CD4-positive, alpha-beta T cell (primary cell): ENCODE measurements at regions of chr9 and their contacts with region 1.

Region 1: DNA sequence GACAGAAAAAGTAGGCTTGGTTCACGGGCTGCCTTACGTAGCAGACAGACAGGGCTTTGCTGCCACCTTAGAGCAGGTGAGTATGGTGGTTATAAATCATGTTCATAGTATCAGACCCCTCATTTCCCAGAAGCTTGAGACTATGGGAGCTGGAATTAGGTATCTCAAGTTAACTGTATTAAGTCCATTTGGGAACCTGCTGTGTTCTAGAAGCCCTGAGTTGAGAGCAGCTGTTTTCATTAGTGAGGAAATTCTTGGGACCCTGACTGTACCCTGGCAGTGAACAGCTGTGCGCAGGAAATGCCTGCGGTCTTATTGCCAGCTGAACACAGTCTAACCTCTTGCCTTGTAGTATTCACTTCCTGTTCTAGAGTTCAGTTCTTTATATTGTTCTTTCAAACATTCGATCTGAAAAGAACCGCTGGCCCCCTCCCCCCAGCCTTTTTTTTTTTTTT is 29.8 kb downstream of the UGCG start:
- DNase-seq: peak; percentile 29 to 89 (median 52)
- ATAC-seq: peak; percentile 95
- H3K4me3 ChIP-seq: no peak overlapping the region
- H3K4me3 Mint-ChIP-seq: peak overlapping the region; percentile 82
- H3K27ac ChIP-seq: peak overlapping the region in 1 of 2 donors; percentile 46
- H3K27ac Mint-ChIP-seq: peak overlapping the region; percentile 87
- H3K4me1 ChIP-seq: peaks cover 27% of the 10 kb centered on the region
- H3K4me1 Mint-ChIP-seq: peaks cover 57% of the 10 kb centered on the region
- H3K27me3 ChIP-seq: no peaks in the 10 kb centered on the region
- H3K27me3 Mint-ChIP-seq: no peaks in the 10 kb centered on the region
- CTCF ChIP-seq: no peak

Region 2: DNA sequence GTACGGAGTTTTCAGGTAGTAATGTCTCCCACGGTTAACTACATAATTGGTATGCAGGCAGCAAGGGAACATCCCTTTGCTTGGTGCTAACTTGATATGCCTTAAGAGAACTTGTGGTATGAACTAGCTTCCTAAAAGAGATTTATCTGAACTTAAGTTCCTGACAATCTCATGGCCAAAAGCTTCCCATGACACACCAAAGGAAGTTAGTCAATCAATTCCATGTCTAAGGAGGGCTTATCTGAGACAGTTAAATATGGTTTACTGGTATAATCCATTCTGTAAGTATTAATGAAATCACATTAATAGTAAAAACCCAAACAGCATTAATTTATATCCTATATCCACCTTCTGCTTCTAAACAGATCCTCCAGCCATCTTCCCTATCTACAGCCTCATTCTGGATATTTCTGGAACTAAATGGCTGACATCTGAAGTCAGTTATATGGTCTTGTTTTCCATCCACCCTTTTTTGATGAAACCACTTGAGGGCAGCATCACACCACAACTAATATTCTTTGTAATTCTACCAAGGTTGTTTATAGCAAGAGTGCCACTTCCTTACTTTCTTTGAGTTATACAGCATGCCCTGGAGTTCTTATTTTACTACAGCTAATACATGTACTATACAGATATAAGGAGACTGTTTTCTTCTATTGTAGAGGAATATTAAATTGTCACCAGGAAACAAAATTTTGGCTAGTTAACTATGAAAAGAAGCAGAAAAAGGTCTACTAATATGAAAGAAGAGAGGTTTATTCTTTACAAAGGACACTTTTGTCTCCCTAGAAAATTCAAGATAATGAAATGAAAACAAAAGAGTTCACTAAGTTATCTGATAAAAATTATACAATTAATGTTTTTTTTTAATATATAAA is 166.4 kb before region 1 on chr9:
- CTCF ChIA-PET with region 1: no interaction called
- POLR2A ChIA-PET with region 1: no interaction called
- intact Hi-C with region 1: loop called in 1 of 2 experiments (anchors 10 kb)
- DNase-seq: peak in 12 of 14 experiments; percentile 6 to 81 (median 32)
- ATAC-seq: peak; percentile 85
- H3K4me3 ChIP-seq: no peak overlapping the region
- H3K4me3 Mint-ChIP-seq: no peak overlapping the region
- H3K27ac ChIP-seq: no peak overlapping the region
- H3K27ac Mint-ChIP-seq: no peak overlapping the region
- H3K4me1 ChIP-seq: no peaks in the 10 kb centered on the region
- H3K4me1 Mint-ChIP-seq: peaks cover 5% of the 10 kb centered on the region
- H3K27me3 ChIP-seq: no peaks in the 10 kb centered on the region
- H3K27me3 Mint-ChIP-seq: no peaks in the 10 kb centered on the region
- CTCF ChIP-seq: peak; percentile 88

Region 3: GRCh38 chr9:111937781-111938426 is 11.5 kb after region 1 on chr9:
- CTCF ChIA-PET with region 1: no interaction called
- POLR2A ChIA-PET with region 1: interaction called, 10 read pairs
- intact Hi-C with region 1: no loop called
- DNase-seq: peak; percentile 20 to 84 (median 43)
- ATAC-seq: peak; percentile 94
- H3K4me3 ChIP-seq: peak overlapping the region; percentile 39
- H3K4me3 Mint-ChIP-seq: peak overlapping the region; percentile 53
- H3K27ac ChIP-seq: peak overlapping the region; percentile 34 to 64
- H3K27ac Mint-ChIP-seq: peak overlapping the region; percentile 87
- H3K4me1 ChIP-seq: peaks cover 20% of the 10 kb centered on the region
- H3K4me1 Mint-ChIP-seq: peaks cover 40% of the 10 kb centered on the region
- H3K27me3 ChIP-seq: no peaks in the 10 kb centered on the region
- H3K27me3 Mint-ChIP-seq: no peaks in the 10 kb centered on the region
- CTCF ChIP-seq: no peak

Region 4: DNA sequence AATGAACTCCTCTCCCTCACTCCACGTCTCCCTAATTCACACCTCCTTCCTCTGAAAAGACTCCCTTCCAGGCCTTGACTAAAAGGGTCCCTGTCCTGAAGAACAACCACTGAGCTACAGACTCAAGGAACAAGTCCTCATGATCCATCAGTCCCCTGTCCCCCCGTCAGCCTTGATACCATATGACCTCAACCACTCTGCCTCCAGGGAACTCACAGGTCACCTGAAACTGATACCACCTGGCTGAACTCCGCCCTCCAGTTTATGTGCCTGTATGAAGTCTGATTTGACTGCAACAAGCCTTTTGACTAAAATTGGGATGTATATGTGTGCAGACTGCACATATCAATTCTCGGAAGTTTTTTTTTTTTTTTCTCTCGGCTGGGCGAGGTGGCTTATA is 58.9 kb after region 1 on chr9:
- CTCF ChIA-PET with region 1: no interaction called
- POLR2A ChIA-PET with region 1: no interaction called
- intact Hi-C with region 1: no loop called
- DNase-seq: no peak
- ATAC-seq: no peak
- H3K4me3 ChIP-seq: no peak overlapping the region
- H3K4me3 Mint-ChIP-seq: no peak overlapping the region
- H3K27ac ChIP-seq: no peak overlapping the region
- H3K27ac Mint-ChIP-seq: no peak overlapping the region
- H3K4me1 ChIP-seq: peaks cover 32% of the 10 kb centered on the region
- H3K4me1 Mint-ChIP-seq: peaks cover 44% of the 10 kb centered on the region
- H3K27me3 ChIP-seq: no peaks in the 10 kb centered on the region
- H3K27me3 Mint-ChIP-seq: no peaks in the 10 kb centered on the region
- CTCF ChIP-seq: no peak

Region 5: DNA sequence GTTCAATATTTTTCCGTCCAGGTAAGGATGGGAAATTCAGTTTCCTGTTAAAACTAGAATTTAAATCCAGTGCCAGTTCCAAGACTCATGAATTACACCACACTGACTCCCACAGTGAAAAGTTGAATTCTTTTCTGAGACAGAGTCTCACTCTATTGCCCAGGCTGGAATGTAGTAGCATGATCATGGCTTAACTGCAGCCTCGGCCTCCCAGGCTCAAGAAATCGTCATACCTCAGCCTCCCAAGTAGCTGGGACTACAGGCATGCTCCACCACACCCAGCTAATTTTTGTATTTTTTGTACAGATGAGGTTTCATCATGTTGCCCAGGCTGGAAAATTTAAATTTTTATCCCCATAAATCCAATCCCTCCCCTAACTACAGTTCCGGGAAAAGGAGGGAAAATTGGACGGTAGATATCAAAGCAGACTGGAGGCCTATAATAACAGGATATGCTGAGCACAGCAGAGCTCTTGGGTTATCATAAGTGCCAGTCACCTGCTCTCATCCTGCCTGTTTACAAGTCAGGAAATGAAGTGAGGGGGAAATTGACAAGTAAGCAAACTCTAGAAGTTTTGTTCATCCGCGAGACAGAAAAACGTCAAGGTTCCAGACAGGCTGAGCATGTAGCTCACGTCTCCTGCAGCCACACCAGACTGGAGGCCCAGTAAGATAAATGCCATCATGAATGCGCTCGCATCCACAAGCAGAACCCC is 75.8 kb after region 1 on chr9:
- CTCF ChIA-PET with region 1: no interaction called
- POLR2A ChIA-PET with region 1: interaction called, 6 read pairs
- intact Hi-C with region 1: loop called in 1 of 2 experiments (anchors 1 kb)
- DNase-seq: peak in 13 of 14 experiments; percentile 11 to 75 (median 26)
- ATAC-seq: peak; percentile 93
- H3K4me3 ChIP-seq: no peak overlapping the region
- H3K4me3 Mint-ChIP-seq: peak overlapping the region; percentile 16
- H3K27ac ChIP-seq: peak overlapping the region in 1 of 2 donors; percentile 56
- H3K27ac Mint-ChIP-seq: peak overlapping the region; percentile 82
- H3K4me1 ChIP-seq: peaks cover 44% of the 10 kb centered on the region
- H3K4me1 Mint-ChIP-seq: peaks cover 50% of the 10 kb centered on the region
- H3K27me3 ChIP-seq: no peaks in the 10 kb centered on the region
- H3K27me3 Mint-ChIP-seq: no peaks in the 10 kb centered on the region
- CTCF ChIP-seq: no peak

Region 6: GRCh38 chr9:112050544-112051475 is 124.4 kb after region 1 on chr9:
- CTCF ChIA-PET with region 1: no interaction called
- POLR2A ChIA-PET with region 1: no interaction called
- intact Hi-C with region 1: no loop called
- DNase-seq: no peak
- ATAC-seq: no peak
- H3K4me3 ChIP-seq: no peak overlapping the region
- H3K4me3 Mint-ChIP-seq: no peak overlapping the region
- H3K27ac ChIP-seq: no peak overlapping the region
- H3K27ac Mint-ChIP-seq: no peak overlapping the region
- H3K4me1 ChIP-seq: peaks cover 7% of the 10 kb centered on the region
- H3K4me1 Mint-ChIP-seq: peaks cover 5% of the 10 kb centered on the region
- H3K27me3 ChIP-seq: no peaks in the 10 kb centered on the region
- H3K27me3 Mint-ChIP-seq: no peaks in the 10 kb centered on the region
- CTCF ChIP-seq: no peak